ENCODE measurements at regions of chr7 and their contacts with region 1.

Region 1: DNA sequence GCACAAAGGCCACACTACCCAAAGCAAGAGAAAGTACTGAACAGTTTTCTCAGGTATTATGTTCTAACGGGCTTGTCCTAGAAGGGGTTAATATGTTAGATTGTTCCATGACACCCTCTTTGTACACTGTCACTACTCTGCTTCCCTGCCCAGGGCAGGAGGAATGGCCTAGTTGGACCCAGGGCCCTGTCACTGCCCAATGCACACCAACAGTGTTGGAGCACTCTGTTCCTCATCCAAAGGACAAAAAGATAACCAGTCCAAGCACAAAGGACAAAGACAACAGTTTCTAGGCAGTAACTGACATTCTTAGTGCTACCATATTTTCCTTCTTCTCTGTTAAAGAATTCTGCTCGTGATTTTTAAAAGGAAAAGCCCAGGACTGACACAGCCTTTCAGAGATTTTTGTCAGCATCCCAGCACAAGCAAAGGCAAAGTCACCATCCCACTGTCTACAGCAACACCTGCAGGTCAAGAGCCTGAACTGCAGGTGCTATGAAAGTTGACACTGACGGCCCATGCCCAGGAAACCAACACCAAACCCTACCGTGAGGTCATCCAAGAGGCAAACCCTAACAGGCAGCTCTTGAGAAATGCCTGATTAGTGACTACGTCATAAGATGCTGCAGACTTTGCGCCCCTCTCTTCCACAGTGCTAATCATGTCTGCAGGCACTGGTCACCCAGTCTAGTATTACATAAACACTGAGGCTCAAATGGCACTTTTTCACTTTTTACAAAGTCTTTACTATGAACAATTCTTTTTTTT is 13.2 kb downstream of the NUDCD3 start:
- DNase-seq: peak; percentile 26 to 84
- H3K4me3 ChIP-seq: no peak overlapping the region
- CTCF ChIP-seq: peak in 1 of 3 donors; percentile 57
- POLR2A ChIP-seq: no peak

Region 2: GRCh38 chr7:44240983-44241510 is 236.2 kb before region 1 on chr7:
- intact Hi-C with region 1: loop called (anchors 10 kb)
- DNase-seq: peak; percentile 61 to 91
- H3K4me3 ChIP-seq: no peak overlapping the region
- CTCF ChIP-seq: no peak
- POLR2A ChIP-seq: no peak

Region 3: DNA sequence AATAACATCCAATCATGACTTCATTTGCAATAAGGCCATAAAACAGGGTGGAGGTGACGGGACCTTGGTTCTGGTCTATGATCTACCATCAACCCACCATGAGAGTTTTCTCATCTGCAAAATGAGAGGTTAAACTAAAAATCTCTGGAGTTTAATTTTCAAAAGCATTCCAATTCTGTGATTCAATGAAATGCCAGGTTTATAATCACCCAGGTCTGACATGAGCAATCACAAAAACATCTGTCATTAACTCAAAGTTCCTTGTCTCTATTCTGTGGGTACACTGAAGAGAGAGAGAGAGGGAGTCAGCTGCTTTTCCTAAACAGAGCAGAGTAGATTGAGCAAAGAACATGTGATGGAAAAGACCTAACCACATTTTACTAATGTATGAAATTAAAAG is 62.2 kb before region 1 on chr7:
- intact Hi-C with region 1: loop called (anchors 10 kb)
- DNase-seq: no peak
- H3K4me3 ChIP-seq: no peak overlapping the region
- CTCF ChIP-seq: no peak
- POLR2A ChIP-seq: no peak